ENCODE measurements at regions of chr2 and their contacts with region 1.

Region 1: GRCh38 chr2:10812362-10813162 is at the start of gene PDIA6:
- DNase-seq: peak; percentile 95
- H3K4me3 Mint-ChIP-seq: peak within 1 kb of the TSS; percentile 89
- H3K27ac Mint-ChIP-seq: peak within 1 kb of the TSS; percentile 92
- H3K4me1 Mint-ChIP-seq: peaks cover 33% of the 10 kb centered on the region
- H3K27me3 Mint-ChIP-seq: peaks cover 18% of the 10 kb centered on the region
- total RNA-seq, gene PDIA6: 210 and 211 TPM in 2 replicates

Region 2: DNA sequence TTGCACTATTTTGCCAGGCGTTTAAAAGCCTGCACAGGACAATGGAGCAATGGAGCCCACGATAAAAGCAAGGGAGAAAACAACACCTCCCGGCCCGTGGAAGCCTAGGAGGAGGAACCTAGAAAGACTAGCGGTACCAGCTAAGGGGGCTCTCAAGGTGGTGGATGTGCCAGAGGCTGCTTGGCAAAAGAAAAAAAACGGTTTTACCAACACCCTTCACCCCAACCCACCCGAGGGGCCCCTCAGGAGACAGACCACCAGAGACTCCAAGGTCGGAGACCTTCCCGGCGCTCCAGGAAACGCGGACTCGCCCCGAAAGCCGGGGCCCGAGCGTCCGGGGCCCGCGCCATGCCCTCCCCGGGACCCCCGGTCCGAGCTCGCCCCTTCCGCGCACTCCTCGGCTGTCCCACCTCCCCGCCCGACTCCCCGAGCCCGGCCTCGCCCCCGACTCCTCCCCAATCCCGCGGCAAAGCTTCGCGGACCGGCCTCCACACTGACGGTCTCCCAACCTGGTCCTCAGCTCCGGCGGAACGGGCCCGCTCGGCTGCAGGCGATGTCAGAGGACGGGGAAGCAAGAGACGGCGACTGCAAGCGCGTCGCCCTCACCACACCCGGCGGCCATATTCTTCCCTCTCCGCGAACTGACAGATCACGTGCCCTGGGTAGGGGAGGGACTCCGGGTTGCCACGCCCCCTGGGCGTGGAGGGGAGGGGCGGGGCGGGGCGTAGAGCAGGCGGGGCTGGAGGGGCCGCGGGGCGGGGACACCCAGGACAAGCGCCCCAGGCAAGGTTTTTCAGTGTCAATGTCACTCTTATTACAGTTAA is 1975.4 kb before region 1 on chr2 and contains the start of gene KIDINS220:
- intact Hi-C with region 1: loop called (anchors 5 kb)
- DNase-seq: peak; percentile 78
- H3K4me3 Mint-ChIP-seq: peak within 1 kb of the TSS; percentile 99
- H3K27ac Mint-ChIP-seq: peak within 1 kb of the TSS; percentile 96
- H3K4me1 Mint-ChIP-seq: peaks cover 18% of the 10 kb centered on the region
- H3K27me3 Mint-ChIP-seq: peaks cover 13% of the 10 kb centered on the region
- total RNA-seq, gene KIDINS220: 24.7 and 26.1 TPM in 2 replicates

Region 3: GRCh38 chr2:11465497-11466406 is 653.2 kb after region 1 on chr2 and contains the start of gene E2F6:
- intact Hi-C with region 1: loop called (anchors 10 kb)
- DNase-seq: peak; percentile 80
- H3K4me3 Mint-ChIP-seq: peak within 1 kb of the TSS; percentile 96
- H3K27ac Mint-ChIP-seq: peak within 1 kb of the TSS; percentile 86
- H3K4me1 Mint-ChIP-seq: peaks cover 20% of the 10 kb centered on the region
- H3K27me3 Mint-ChIP-seq: no peaks in the 10 kb centered on the region
- total RNA-seq, gene E2F6: 16.8 and 18.2 TPM in 2 replicates

Region 4: GRCh38 chr2:11482723-11483518 is 670.4 kb after region 1 on chr2:
- intact Hi-C with region 1: no loop called
- DNase-seq: no peak
- H3K4me3 Mint-ChIP-seq: peak overlapping the region; percentile 26
- H3K27ac Mint-ChIP-seq: no peak overlapping the region
- H3K4me1 Mint-ChIP-seq: peaks cover 7% of the 10 kb centered on the region
- H3K27me3 Mint-ChIP-seq: peaks cover 63% of the 10 kb centered on the region

Measured in activated T-helper 2 cell treated with anti-CD3 and anti-CD28 coated beads, Interferon-gamma antibody, Interleukin-2, Interleukin-4, amounts not matched to agents 10 μg/mL and 5 μg/mL and 100 μg/mL, durations not matched to agents 14 hours and 24 hours and 36 hours (primary cell).